ENCODE measurements at regions of chr1 and their contacts with region 1.

Region 1: DNA sequence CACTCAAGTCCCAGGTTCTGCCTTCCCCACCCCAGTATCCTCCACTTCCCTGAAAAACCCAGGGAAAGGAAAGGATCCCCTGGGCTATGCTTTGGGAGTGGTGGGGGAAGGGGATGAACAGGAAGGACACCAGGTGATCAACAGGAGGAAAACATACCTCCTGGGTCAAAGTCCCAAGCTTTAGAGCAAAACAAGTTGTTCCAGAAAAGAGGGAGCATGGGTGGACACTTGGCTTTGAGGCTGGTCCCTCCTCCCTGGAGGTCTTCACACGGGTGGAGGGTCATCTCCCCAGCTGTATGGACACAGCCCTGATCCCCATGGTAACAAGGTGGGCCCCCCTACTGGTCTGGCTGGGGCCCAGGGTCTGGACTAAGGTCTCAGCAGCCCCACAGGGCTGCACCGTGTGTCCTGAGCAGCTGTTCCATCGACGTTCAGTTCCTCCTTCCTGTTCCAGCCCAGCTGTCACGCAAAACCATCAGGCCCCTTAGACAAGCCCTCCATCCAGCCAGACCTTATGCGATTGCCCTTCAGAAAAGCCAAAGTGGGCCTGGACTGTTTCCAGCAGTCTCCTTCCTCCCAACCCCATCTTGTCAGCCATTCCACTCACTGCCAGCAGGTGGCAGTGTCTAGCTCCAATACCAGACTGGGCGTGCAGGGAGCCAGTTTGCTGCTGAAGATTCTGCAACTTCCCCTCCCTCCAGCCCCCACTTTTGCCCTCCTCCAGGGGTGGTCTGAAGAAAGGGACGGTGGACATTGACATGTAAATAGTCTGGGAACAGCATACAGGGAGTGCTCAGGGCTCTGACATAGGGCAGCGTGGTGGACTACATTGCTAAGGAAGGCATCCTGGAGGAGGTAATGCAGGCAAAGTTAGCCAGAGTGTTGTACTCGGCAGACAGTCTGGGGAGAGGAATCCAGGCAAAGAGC is 2.9 kb upstream of the PDZK1IP1 start:
- DNase-seq: peak; percentile 24 to 77 (median 62)
- ATAC-seq: peak; percentile 62
- H3K4me3 ChIP-seq: no peak overlapping the region
- H3K4me3 Mint-ChIP-seq: no peak overlapping the region
- H3K27ac ChIP-seq: no peak overlapping the region
- H3K27ac Mint-ChIP-seq: no peak overlapping the region
- H3K4me1 ChIP-seq: no peaks in the 10 kb centered on the region
- H3K4me1 Mint-ChIP-seq: peaks cover 4% of the 10 kb centered on the region
- H3K27me3 ChIP-seq: no peaks in the 10 kb centered on the region
- H3K27me3 Mint-ChIP-seq: peaks cover 7% of the 10 kb centered on the region
- CTCF ChIP-seq: peak; percentile 95

Region 2: GRCh38 chr1:47211796-47212269 is 19.1 kb after region 1 on chr1:
- CTCF ChIA-PET with region 1: interaction called, 16 read pairs
- POLR2A ChIA-PET with region 1: no interaction called
- intact Hi-C with region 1: no loop called
- DNase-seq: no peak
- ATAC-seq: no peak
- H3K4me3 ChIP-seq: no peak overlapping the region
- H3K4me3 Mint-ChIP-seq: no peak overlapping the region
- H3K27ac ChIP-seq: no peak overlapping the region
- H3K27ac Mint-ChIP-seq: no peak overlapping the region
- H3K4me1 ChIP-seq: no peaks in the 10 kb centered on the region
- H3K4me1 Mint-ChIP-seq: no peaks in the 10 kb centered on the region
- H3K27me3 ChIP-seq: no peaks in the 10 kb centered on the region
- H3K27me3 Mint-ChIP-seq: peaks cover 6% of the 10 kb centered on the region
- CTCF ChIP-seq: no peak

Region 3: GRCh38 chr1:47262787-47263413 is 70.2 kb after region 1 on chr1:
- CTCF ChIA-PET with region 1: interaction called, 12 read pairs
- POLR2A ChIA-PET with region 1: no interaction called
- intact Hi-C with region 1: loop called in 1 of 2 experiments (anchors 5 kb)
- DNase-seq: peak in 5 of 9 experiments; percentile 15 to 48 (median 37)
- ATAC-seq: peak; percentile 40
- H3K4me3 ChIP-seq: no peak overlapping the region
- H3K4me3 Mint-ChIP-seq: no peak overlapping the region
- H3K27ac ChIP-seq: no peak overlapping the region
- H3K27ac Mint-ChIP-seq: no peak overlapping the region
- H3K4me1 ChIP-seq: no peaks in the 10 kb centered on the region
- H3K4me1 Mint-ChIP-seq: no peaks in the 10 kb centered on the region
- H3K27me3 ChIP-seq: no peaks in the 10 kb centered on the region
- H3K27me3 Mint-ChIP-seq: no peaks in the 10 kb centered on the region
- CTCF ChIP-seq: peak; percentile 45

Region 4: GRCh38 chr1:47710329-47711071 is 517.8 kb after region 1 on chr1:
- CTCF ChIA-PET with region 1: interaction called, 13 read pairs
- POLR2A ChIA-PET with region 1: no interaction called
- intact Hi-C with region 1: loop called (anchors 1 to 5 kb)
- DNase-seq: peak; percentile 35 to 78 (median 62)
- ATAC-seq: peak; percentile 71
- H3K4me3 ChIP-seq: peak overlapping the region in 1 of 2 experiments; percentile 33
- H3K4me3 Mint-ChIP-seq: peak overlapping the region; percentile 32
- H3K27ac ChIP-seq: no peak overlapping the region
- H3K27ac Mint-ChIP-seq: no peak overlapping the region
- H3K4me1 ChIP-seq: peaks cover 21% of the 10 kb centered on the region
- H3K4me1 Mint-ChIP-seq: peaks cover 11% of the 10 kb centered on the region
- H3K27me3 ChIP-seq: peaks cover 16 to 42% of the 10 kb centered on the region in 2 experiments
- H3K27me3 Mint-ChIP-seq: peaks cover 67% of the 10 kb centered on the region
- CTCF ChIP-seq: peak; percentile 84